WTC11 (cell line): ENCODE measurements at regions of chr5 and their contacts with region 1.

Region 1: DNA sequence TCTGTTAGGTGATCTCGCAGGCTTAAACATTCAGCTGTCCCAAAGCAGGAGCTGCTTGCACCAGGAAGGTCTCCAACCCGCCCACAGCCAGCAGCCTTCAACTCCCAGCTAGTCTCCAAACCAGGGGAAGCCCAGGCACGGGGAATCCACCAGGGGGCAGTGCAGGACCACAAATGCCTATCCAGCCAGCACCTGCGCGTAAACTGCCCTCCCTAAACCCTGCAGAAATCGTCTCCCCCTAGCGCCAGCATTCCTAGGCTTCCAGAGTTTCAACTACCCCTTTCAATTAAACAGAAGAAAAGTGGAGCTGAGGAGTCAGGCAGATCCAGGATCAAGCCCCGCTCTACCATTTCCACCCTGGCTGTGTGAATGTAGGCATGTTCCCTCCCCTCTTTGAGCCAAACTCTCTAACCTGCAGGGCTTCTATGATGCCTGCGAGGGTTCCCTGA is 72.0 kb downstream of the HRH2 start:
- DNase-seq: peak; percentile 100
- ATAC-seq: peak; percentile 87
- H3K4me3 Mint-ChIP-seq: peak overlapping the region; percentile 74
- H3K27ac Mint-ChIP-seq: no peak overlapping the region
- H3K4me1 Mint-ChIP-seq: peaks cover 27% of the 10 kb centered on the region
- H3K27me3 Mint-ChIP-seq: peaks cover 5% of the 10 kb centered on the region
- CTCF ChIP-seq: peak; percentile 98

Region 2: GRCh38 chr5:175556777-175557176 is 173.1 kb before region 1 on chr5:
- CTCF ChIA-PET with region 1: interaction called, 10 read pairs
- POLR2A ChIA-PET with region 1: no interaction called
- DNase-seq: no peak
- ATAC-seq: peak; percentile 17
- H3K4me3 Mint-ChIP-seq: peak overlapping the region; percentile 37; the same call in 1 of the 2 replicates
- H3K27ac Mint-ChIP-seq: peak overlapping the region; percentile 86
- H3K4me1 Mint-ChIP-seq: peaks cover 70% of the 10 kb centered on the region
- H3K27me3 Mint-ChIP-seq: no peaks in the 10 kb centered on the region
- CTCF ChIP-seq: no peak

Region 3: DNA sequence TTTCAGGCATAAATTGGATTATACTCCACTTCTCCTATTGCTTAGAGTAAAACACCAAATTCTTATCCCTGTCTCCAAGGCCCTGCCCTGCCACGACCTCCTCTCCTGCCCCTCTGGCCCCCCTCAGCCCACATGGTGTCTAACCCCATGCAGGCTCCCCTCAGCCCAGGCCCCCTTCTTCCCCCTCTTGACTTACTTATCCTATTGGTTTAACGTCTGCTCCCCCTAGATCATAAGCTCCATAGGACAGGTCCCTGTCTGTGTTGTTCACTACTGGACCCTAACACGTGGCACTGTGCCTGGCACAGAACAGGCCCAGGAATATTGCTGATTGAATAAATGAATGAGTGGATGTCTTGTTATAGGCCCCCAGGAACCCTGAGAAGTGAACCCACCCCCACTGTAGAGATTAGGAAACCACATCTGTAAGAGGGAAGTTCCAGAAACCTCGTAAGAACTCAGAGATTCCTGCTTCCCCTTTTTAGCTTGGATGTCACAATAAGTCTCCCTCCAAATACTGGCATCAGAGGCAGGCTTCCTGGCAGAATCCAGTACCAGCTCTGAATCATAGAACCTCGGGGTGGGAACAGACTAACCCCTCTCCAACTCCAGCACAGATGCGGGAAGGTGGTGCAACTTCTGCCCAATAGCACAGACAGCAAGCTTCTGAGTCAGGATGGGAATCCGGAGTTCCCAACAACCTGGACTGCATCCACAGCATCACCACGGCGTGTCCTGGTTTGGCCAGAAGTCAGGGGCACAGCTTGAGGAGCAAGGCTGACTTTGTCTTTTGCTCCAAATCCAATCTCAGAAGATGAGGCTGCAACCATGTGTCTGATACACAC is 40.5 kb before region 1 on chr5:
- CTCF ChIA-PET with region 1: interaction called, 43 read pairs
- POLR2A ChIA-PET with region 1: no interaction called
- DNase-seq: no peak
- ATAC-seq: no peak
- H3K4me3 Mint-ChIP-seq: no peak overlapping the region
- H3K27ac Mint-ChIP-seq: no peak overlapping the region
- H3K4me1 Mint-ChIP-seq: peaks cover 21% of the 10 kb centered on the region
- H3K27me3 Mint-ChIP-seq: no peaks in the 10 kb centered on the region
- CTCF ChIP-seq: no peak

Region 4: DNA sequence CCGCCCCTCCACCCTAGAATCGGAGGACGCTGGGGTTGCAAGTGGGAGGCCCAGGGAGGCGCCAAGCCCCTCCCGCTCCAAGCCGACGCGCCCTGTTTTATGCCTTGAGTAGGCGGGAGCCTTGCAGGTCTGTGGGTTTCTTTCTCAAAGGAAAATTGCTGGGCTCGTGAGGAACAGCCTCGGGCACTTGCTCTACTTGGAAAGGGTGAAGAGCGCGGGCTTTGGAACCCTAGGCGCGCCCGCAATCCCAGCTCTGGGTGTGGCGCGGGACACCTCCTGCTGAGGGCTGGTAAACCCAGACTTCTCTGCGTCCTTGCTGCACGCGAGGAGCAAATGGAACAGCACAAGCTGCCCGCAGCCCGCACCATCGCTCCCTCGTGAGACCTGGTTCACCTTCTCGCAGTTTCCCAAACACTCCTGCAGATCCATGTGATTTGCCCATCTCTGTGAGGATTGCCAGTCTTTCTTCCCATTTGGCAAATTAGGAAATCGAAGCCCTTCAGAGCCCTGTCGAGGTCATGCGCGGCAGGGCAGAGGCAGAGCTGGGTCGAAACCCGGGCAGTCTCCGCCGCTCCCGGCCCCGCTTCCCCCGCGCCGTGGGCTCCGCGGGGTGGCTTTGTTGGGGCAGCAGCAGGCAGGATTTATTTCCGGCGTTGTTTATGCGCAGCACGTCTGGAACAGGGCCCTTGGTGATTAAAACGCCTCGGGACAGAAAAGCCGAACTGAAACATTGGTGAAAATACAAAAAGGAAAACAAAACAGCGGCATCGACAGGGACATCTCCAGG is 43.1 kb after region 1 on chr5:
- CTCF ChIA-PET with region 1: interaction called, 45 read pairs
- POLR2A ChIA-PET with region 1: no interaction called
- DNase-seq: peak; percentile 45
- ATAC-seq: peak; percentile 58
- H3K4me3 Mint-ChIP-seq: peak overlapping the region; percentile 60
- H3K27ac Mint-ChIP-seq: no peak overlapping the region
- H3K4me1 Mint-ChIP-seq: peaks cover 15% of the 10 kb centered on the region
- H3K27me3 Mint-ChIP-seq: peaks cover 29% of the 10 kb centered on the region
- CTCF ChIP-seq: no peak

Region 5: GRCh38 chr5:175821790-175822211 is 91.9 kb after region 1 on chr5:
- CTCF ChIA-PET with region 1: interaction called, 20 read pairs
- POLR2A ChIA-PET with region 1: no interaction called
- DNase-seq: no peak
- ATAC-seq: no peak
- H3K4me3 Mint-ChIP-seq: no peak overlapping the region
- H3K27ac Mint-ChIP-seq: no peak overlapping the region
- H3K4me1 Mint-ChIP-seq: peaks cover 41% of the 10 kb centered on the region
- H3K27me3 Mint-ChIP-seq: no peaks in the 10 kb centered on the region
- CTCF ChIP-seq: no peak

Region 6: DNA sequence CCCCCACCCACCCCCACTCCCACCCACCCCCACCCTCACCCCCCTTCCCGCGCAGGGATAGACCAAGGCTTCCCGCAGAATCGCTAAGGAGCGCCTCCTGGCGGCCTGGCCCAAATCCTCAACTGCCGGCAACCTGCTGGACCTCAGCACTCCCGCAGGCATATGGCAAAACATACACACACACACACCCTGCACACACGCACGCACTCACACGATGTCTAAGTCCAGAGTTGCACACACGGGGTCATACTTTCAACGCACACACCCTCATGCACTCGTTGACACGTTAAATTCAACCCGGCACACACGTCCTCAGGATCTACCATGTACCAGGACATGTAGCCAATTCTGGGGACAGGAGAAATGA is 143.2 kb after region 1 on chr5:
- CTCF ChIA-PET with region 1: interaction called, 149 read pairs
- POLR2A ChIA-PET with region 1: interaction called, 12 read pairs
- DNase-seq: peak; percentile 84
- ATAC-seq: peak; percentile 33
- H3K4me3 Mint-ChIP-seq: peak overlapping the region; percentile 64
- H3K27ac Mint-ChIP-seq: no peak overlapping the region
- H3K4me1 Mint-ChIP-seq: peaks cover 41% of the 10 kb centered on the region
- H3K27me3 Mint-ChIP-seq: peaks cover 32% of the 10 kb centered on the region
- CTCF ChIP-seq: peak; percentile 30; the same call in 1 of the 2 replicates

Region 7: DNA sequence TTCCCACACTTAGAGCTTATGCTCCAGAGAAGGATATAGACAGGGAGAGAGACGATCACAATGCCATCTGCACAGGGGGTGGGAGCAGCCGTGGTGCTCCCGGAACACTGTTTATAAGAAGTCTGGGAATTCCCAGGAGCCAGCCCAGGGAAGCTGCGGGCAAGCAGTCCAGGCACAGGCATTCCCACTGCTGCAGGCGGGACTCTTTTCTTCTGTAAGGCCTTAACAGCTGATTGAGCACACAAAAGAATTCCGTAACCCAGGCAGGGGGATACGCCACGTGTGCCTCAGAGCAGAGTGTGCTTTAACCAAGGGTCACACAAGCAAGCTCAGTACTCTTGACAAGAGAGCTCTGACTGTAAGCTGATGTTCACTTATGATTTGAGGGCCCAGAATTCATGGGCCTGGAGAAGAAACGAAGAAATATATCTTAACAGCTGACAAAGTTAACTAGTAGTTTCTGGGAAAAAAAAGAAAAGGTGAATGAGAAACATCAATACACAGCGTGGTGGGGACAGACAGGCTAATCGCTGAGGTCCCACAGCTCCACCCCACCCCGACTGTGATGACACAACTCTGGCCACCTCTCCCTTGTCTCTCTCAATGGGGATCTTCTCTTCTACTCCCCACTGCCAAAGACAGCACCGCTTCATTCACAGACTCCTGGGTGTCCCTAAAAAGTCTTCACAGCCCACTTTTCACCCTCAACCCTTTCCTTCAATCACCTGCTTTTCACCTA is 422.5 kb after region 1 on chr5:
- CTCF ChIA-PET with region 1: interaction called, 14 read pairs
- POLR2A ChIA-PET with region 1: no interaction called
- DNase-seq: peak; percentile 37
- ATAC-seq: peak; percentile 83
- H3K4me3 Mint-ChIP-seq: no peak overlapping the region
- H3K27ac Mint-ChIP-seq: no peak overlapping the region
- H3K4me1 Mint-ChIP-seq: peaks cover 18% of the 10 kb centered on the region
- H3K27me3 Mint-ChIP-seq: no peaks in the 10 kb centered on the region; the same call in 1 of the 2 replicates
- CTCF ChIP-seq: no peak